ENCODE measurements at regions of chr4 and their contacts with region 1.

Region 1: GRCh38 chr4:152247271-152247975 is 288.5 kb downstream of the FBXW7 start:
- DNase-seq: no peak
- ATAC-seq: no peak
- H3K4me3 Mint-ChIP-seq: peak overlapping the region in 2 of 10 donors; percentile 20 to 43
- H3K27ac Mint-ChIP-seq: peak overlapping the region in 7 of 10 donors; percentile 19 to 85 (median 62)
- H3K4me1 Mint-ChIP-seq: peaks cover 26 to 56% (median 37%) of the 10 kb centered on the region in 4 donors
- H3K27me3 Mint-ChIP-seq: no peaks in the 10 kb centered on the region

Region 2: GRCh38 chr4:152202415-152202814 is 45.0 kb before region 1 on chr4:
- POLR2A ChIA-PET with region 1: interaction called, 10 read pairs
- DNase-seq: no peak
- ATAC-seq: no peak
- H3K4me3 Mint-ChIP-seq: no peak overlapping the region
- H3K27ac Mint-ChIP-seq: no peak overlapping the region
- H3K4me1 Mint-ChIP-seq: peaks cover 0 to 6% (median 2%) of the 10 kb centered on the region in 4 donors
- H3K27me3 Mint-ChIP-seq: peaks cover 0 to 2% (median 0%) of the 10 kb centered on the region in 5 donors